Sciatic nerve (tissue), 2 donors: ENCODE measurements at regions of chr11 and their contacts with region 1.

Region 1: GRCh38 chr11:46889689-46890475 is 28.5 kb downstream of the LRP4 start:
- DNase-seq: peak; percentile 86
- ATAC-seq: peak; percentile 89

Region 2: GRCh38 chr11:44950625-44951476 is 1939.0 kb before region 1 on chr11 and contains the start of gene TP53I11:
- intact Hi-C with region 1: loop called (anchors 10 kb)
- DNase-seq: peak; percentile 86
- ATAC-seq: peak; percentile 81
- total RNA-seq, gene TP53I11: 101 TPM

Region 3: GRCh38 chr11:47152953-47153950 is 263.4 kb after region 1 on chr11:
- intact Hi-C with region 1: loop called (anchors 5 kb)
- DNase-seq: peak; percentile 88
- ATAC-seq: peak; percentile 92